Activated naive CD4-positive, alpha-beta T cell treated with anti-CD3 and anti-CD28 coated beads for 36 hours (primary cell): ENCODE measurements at regions of chr5 and their contacts with region 1.

Region 1: DNA sequence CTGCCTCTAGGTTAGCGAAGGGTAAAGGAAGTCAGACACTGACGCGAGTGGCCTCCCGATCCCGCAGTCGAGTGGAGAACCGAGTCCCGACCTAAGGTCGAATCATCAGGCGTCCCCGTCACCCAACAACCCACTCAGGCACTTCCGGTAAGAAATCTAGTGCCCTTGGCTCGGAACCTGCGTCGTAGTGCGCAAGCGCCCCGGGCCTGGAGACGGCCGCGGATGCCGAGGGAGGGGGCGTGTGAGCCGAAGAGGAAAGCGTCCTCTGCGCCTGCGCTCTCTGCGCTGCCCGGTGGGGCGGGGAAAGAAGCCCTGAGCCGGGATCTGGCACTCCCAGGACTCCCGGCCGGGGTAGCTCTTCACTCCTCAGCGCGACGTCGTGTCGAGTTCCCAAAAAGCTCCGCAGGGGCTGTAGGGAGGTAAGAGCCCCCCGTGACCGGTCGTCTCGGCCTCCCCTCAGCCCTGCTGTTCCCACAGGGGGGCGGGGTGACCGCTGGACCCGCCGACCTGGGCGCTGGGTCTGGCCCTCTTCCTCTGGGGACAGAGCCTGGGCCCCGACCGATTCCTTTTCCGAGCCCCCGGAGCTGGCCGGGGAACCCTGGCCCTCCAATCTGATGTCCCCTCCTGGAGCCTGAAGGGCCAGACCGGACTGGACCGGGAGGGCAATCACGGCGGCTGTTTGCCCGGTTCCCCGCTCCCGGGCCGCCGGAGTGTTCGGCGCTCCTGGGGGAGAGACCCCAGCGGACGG is at the start of gene ZFYVE16:
- DNase-seq: peak; percentile 97
- H3K4me3 Mint-ChIP-seq: peak within 1 kb of the TSS; percentile 97
- H3K27ac Mint-ChIP-seq: peak within 1 kb of the TSS; percentile 96
- H3K4me1 Mint-ChIP-seq: peaks cover 14% of the 10 kb centered on the region
- H3K27me3 Mint-ChIP-seq: no peaks in the 10 kb centered on the region
- total RNA-seq, gene ZFYVE16: 8.0 to 10.3 TPM

Region 2: GRCh38 chr5:79514391-79515105 is 893.4 kb before region 1 on chr5:
- CTCF ChIA-PET with region 1: no interaction called
- intact Hi-C with region 1: loop called (anchors 1 kb)
- DNase-seq: peak; percentile 91
- H3K4me3 Mint-ChIP-seq: peak overlapping the region; percentile 96
- H3K27ac Mint-ChIP-seq: peak overlapping the region; percentile 93
- H3K4me1 Mint-ChIP-seq: peaks cover 33% of the 10 kb centered on the region
- H3K27me3 Mint-ChIP-seq: peaks cover 19% of the 10 kb centered on the region

Region 3: DNA sequence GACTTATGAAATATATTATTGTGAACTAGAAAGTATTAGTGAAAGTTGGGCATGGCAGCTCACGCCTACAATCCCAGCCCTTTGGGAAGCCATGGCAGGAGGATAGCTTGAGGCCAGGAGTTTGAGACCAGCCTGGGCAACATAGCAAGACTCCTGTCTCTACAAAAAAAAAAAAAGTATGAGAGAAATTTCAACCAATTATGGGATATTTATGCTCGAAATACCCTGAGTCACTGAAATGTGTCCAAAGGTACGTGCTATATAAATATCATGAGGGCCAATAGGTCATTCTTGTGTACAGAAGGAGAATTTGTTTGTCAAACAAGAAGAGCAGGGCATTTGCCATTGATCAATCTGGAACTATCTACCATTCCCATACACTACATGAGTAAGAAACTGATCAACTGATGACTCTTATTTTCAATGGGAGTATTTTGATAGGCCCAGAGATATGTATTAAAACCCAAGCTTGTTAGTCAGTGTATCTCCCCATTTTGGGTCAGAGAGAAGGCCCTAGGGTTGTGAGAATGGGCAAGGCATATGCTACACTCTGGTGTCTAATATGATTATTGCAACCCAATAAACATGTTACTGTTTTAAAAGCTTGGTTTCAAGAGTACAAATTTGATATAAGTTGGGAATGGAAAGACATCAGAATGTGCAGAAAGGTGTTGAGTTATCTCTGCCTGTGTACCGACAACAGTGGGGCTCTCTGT is 872.3 kb before region 1 on chr5:
- CTCF ChIA-PET with region 1: no interaction called
- intact Hi-C with region 1: no loop called
- DNase-seq: no peak
- H3K4me3 Mint-ChIP-seq: no peak overlapping the region
- H3K27ac Mint-ChIP-seq: no peak overlapping the region
- H3K4me1 Mint-ChIP-seq: no peaks in the 10 kb centered on the region
- H3K27me3 Mint-ChIP-seq: no peaks in the 10 kb centered on the region

Region 4: GRCh38 chr5:80255732-80256479 is 152.0 kb before region 1 on chr5 and contains the start of gene SERINC5:
- CTCF ChIA-PET with region 1: no interaction called
- intact Hi-C with region 1: loop called (anchors 5 kb)
- DNase-seq: peak; percentile 86
- H3K4me3 Mint-ChIP-seq: peak within 1 kb of the TSS; percentile 97
- H3K27ac Mint-ChIP-seq: peak within 1 kb of the TSS; percentile 98
- H3K4me1 Mint-ChIP-seq: peaks cover 43% of the 10 kb centered on the region
- H3K27me3 Mint-ChIP-seq: no peaks in the 10 kb centered on the region
- total RNA-seq, gene SERINC5: 34.8 to 36.4 TPM

Region 5: DNA sequence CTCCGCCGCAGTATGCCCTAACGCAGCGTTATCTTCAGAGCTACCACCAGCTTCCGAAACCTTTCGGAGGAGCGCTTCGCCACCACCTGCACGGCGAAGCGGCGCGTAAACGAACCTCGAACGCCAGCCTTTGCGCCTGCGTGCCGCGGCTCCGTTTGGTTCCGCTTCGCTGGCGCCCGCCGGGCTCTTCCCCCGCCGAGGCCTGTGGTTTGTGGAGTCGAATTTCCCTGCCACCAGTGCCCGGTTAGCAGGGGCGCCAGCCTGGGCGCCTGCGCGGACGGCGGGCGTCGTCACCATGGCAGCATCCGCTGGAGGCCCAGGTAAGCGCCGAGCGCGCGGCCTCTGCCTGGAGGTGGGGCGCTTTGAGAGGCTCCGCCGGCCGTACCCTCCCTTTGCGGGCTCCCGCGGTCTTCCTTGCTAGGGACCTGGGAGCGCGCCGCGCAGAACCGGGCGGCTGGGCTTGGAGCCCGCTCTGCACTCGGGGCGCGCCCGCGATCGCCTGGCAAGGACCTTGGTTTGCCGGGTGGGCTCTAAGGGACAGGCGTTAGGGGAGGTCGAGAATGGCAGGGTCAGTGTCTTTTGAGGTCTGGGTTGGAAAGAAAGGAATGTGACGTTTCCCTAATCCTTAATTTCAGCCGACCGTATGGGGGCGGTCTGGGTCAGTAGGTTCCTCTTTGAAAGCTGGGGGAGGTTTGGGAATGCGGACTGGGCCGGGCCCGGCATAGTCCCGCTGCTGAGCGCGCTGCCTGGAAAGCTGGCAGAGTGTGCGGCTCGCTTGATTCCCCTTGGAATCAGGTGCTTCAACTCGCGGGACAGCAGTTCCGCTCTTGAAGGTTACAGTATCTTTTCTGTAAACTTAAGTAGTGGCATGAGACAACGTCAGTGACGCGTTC is 80.2 kb after region 1 on chr5 and contains the start of gene FAM151B:
- CTCF ChIA-PET with region 1: no interaction called
- intact Hi-C with region 1: loop called (anchors 1 kb)
- DNase-seq: peak; percentile 85
- H3K4me3 Mint-ChIP-seq: peak within 1 kb of the TSS; percentile 79
- H3K27ac Mint-ChIP-seq: no peak within 1 kb of the TSS
- H3K4me1 Mint-ChIP-seq: peaks cover 13% of the 10 kb centered on the region
- H3K27me3 Mint-ChIP-seq: no peaks in the 10 kb centered on the region
- total RNA-seq, gene FAM151B: 0.15 to 0.36 TPM

Region 6: DNA sequence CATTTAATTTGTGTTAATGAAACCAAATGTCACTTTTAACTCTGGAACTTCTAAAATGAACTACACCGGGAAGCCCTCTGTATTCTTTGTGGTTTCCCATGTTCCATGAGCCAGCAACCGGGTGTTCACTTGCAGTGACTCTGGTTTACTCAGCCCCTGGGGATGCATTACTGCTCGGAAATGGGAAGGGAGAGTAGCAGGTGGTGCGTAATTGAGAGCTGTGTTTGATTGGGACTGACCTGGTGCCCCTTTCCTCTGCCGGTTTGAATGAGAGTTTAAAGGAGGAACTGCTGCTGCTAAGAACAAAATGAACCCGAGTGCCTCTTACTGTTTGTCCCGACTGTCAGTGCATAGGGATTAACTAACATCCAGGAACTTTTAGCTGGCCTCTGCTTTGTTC is 347.0 kb after region 1 on chr5:
- CTCF ChIA-PET with region 1: no interaction called
- intact Hi-C with region 1: loop called (anchors 5 kb)
- DNase-seq: peak; percentile 81
- H3K4me3 Mint-ChIP-seq: peak overlapping the region; percentile 32
- H3K27ac Mint-ChIP-seq: peak overlapping the region; percentile 43
- H3K4me1 Mint-ChIP-seq: peaks cover 54% of the 10 kb centered on the region
- H3K27me3 Mint-ChIP-seq: no peaks in the 10 kb centered on the region

Region 7: GRCh38 chr5:80809451-80809850 is 401.5 kb after region 1 on chr5:
- CTCF ChIA-PET with region 1: no interaction called
- intact Hi-C with region 1: no loop called
- DNase-seq: no peak
- H3K4me3 Mint-ChIP-seq: no peak overlapping the region
- H3K27ac Mint-ChIP-seq: no peak overlapping the region
- H3K4me1 Mint-ChIP-seq: peaks cover 8% of the 10 kb centered on the region
- H3K27me3 Mint-ChIP-seq: no peaks in the 10 kb centered on the region